ENCODE measurements at regions of chr15 and their contacts with region 1.

Region 1: GRCh38 chr15:53225781-53226180 is 435.6 kb upstream of the ONECUT1 start:
- DNase-seq: no peak
- H3K4me3 ChIP-seq: no peak overlapping the region
- H3K4me3 Mint-ChIP-seq: no peak overlapping the region
- H3K27ac Mint-ChIP-seq: no peak overlapping the region
- H3K4me1 ChIP-seq: no peaks in the 10 kb centered on the region
- H3K4me1 Mint-ChIP-seq: no peaks in the 10 kb centered on the region
- H3K27me3 ChIP-seq: no peaks in the 10 kb centered on the region
- H3K27me3 Mint-ChIP-seq: peaks cover 2% of the 10 kb centered on the region
- CTCF ChIP-seq: no peak

Region 2: DNA sequence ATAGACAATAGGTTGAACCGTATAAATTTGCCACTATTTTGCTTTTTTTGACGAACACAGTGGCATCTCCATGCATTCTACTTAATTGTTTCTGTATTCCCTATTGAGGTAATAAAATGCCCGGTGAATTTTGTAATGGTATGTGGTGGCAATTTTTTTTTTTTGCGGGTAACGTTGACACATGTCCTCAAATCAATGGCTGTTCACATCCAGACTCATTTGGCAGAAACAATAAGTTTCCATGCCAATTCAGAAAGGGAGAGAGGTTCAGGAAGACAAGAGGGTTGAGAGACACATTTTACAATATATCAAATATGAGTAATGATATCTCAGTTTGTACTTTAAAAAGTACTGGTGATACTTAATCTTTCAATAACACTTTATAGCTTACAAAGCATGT is 69.8 kb after region 1 on chr15:
- CTCF ChIA-PET with region 1: no interaction called
- POLR2A ChIA-PET with region 1: no interaction called
- intact Hi-C with region 1: loop called (anchors 2 kb)
- DNase-seq: no peak
- H3K4me3 ChIP-seq: no peak overlapping the region
- H3K4me3 Mint-ChIP-seq: no peak overlapping the region
- H3K27ac Mint-ChIP-seq: no peak overlapping the region
- H3K4me1 ChIP-seq: no peaks in the 10 kb centered on the region
- H3K4me1 Mint-ChIP-seq: no peaks in the 10 kb centered on the region
- H3K27me3 ChIP-seq: no peaks in the 10 kb centered on the region
- H3K27me3 Mint-ChIP-seq: peaks cover 8% of the 10 kb centered on the region
- CTCF ChIP-seq: no peak